CD4-positive, alpha-beta T cell (primary cell): ENCODE measurements at regions of chr13 and their contacts with region 1.

Region 1: DNA sequence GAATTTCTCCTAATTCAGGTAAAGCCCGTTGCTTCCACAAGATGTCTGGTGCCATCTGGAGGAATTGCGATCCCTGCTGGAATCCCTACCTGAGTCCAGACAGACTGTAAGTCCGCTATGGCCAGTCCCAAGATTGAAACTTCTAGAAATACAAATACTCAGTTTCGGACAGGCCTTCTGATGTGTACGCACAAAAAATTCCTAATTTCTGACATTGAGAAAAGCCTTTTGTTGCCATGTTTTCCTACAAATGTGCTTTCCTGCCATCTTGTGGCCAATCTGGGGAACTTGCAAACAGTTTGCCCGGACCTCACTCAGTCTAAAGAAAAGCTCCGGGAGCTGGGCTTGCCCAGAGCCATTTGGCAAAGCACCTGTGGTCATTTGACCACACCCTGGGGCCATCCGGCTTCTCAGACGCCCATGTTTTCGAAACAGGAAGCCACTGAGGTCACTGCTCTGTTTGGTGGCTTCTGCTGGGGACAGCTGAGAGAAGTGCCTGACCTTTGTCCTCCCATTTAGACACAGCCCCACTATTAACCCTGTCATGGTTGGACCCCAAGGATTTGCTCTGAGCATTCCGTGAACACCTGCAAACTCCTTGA is 79.4 kb downstream of the SLC15A1 start:
- DNase-seq: peak; percentile 19 to 75 (median 34)
- ATAC-seq: peak; percentile 46
- H3K4me3 ChIP-seq: no peak overlapping the region
- H3K4me3 Mint-ChIP-seq: no peak overlapping the region
- H3K27ac ChIP-seq: no peak overlapping the region
- H3K27ac Mint-ChIP-seq: no peak overlapping the region
- H3K4me1 ChIP-seq: peaks cover 6% of the 10 kb centered on the region
- H3K4me1 Mint-ChIP-seq: no peaks in the 10 kb centered on the region
- H3K27me3 ChIP-seq: no peaks in the 10 kb centered on the region
- H3K27me3 Mint-ChIP-seq: no peaks in the 10 kb centered on the region
- CTCF ChIP-seq: peak; percentile 79

Region 2: GRCh38 chr13:97855570-97856303 is 817.3 kb before region 1 on chr13:
- CTCF ChIA-PET with region 1: no interaction called
- POLR2A ChIA-PET with region 1: no interaction called
- intact Hi-C with region 1: loop called (anchors 1 to 2 kb)
- DNase-seq: peak in 4 of 14 experiments; percentile 3 to 38 (median 24)
- ATAC-seq: no peak
- H3K4me3 ChIP-seq: no peak overlapping the region
- H3K4me3 Mint-ChIP-seq: no peak overlapping the region
- H3K27ac ChIP-seq: no peak overlapping the region
- H3K27ac Mint-ChIP-seq: no peak overlapping the region
- H3K4me1 ChIP-seq: no peaks in the 10 kb centered on the region
- H3K4me1 Mint-ChIP-seq: no peaks in the 10 kb centered on the region
- H3K27me3 ChIP-seq: no peaks in the 10 kb centered on the region
- H3K27me3 Mint-ChIP-seq: peaks cover 29% of the 10 kb centered on the region
- CTCF ChIP-seq: peak; percentile 65

Region 3: DNA sequence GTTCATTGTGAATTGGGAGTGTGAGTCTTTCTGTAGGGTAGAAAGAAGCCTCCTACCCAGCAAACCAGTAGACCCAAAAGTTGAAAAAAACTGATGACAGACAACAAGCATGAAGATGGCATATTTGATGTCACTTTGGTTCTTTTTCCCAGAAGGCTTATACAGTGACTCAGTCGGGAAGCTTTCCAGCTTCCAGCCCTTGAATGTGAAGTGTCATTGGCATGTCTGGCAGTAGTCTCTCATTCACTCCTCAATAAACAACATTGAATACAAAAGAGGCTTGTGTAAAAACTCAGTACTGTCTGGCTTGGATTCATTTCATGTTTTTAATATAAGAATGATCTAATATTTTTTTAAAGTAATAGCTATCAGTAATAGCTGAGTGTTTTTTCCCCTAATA is 650.8 kb before region 1 on chr13:
- CTCF ChIA-PET with region 1: no interaction called
- POLR2A ChIA-PET with region 1: no interaction called
- intact Hi-C with region 1: loop called in 1 of 2 experiments (anchors 10 kb)
- DNase-seq: no peak
- ATAC-seq: no peak
- H3K4me3 ChIP-seq: no peak overlapping the region
- H3K4me3 Mint-ChIP-seq: no peak overlapping the region
- H3K27ac ChIP-seq: no peak overlapping the region
- H3K27ac Mint-ChIP-seq: no peak overlapping the region
- H3K4me1 ChIP-seq: no peaks in the 10 kb centered on the region
- H3K4me1 Mint-ChIP-seq: no peaks in the 10 kb centered on the region
- H3K27me3 ChIP-seq: no peaks in the 10 kb centered on the region
- H3K27me3 Mint-ChIP-seq: no peaks in the 10 kb centered on the region
- CTCF ChIP-seq: no peak

Region 4: GRCh38 chr13:98349731-98350305 is 323.2 kb before region 1 on chr13:
- CTCF ChIA-PET with region 1: no interaction called
- POLR2A ChIA-PET with region 1: no interaction called
- intact Hi-C with region 1: loop called in 1 of 2 experiments (anchors 10 kb)
- DNase-seq: no peak
- ATAC-seq: no peak
- H3K4me3 ChIP-seq: no peak overlapping the region
- H3K4me3 Mint-ChIP-seq: no peak overlapping the region
- H3K27ac ChIP-seq: no peak overlapping the region
- H3K27ac Mint-ChIP-seq: no peak overlapping the region
- H3K4me1 ChIP-seq: no peaks in the 10 kb centered on the region
- H3K4me1 Mint-ChIP-seq: no peaks in the 10 kb centered on the region
- H3K27me3 ChIP-seq: no peaks in the 10 kb centered on the region
- H3K27me3 Mint-ChIP-seq: no peaks in the 10 kb centered on the region
- CTCF ChIP-seq: no peak

Region 5: GRCh38 chr13:98445340-98446233 is 227.5 kb before region 1 on chr13:
- CTCF ChIA-PET with region 1: interaction called, 9 read pairs
- POLR2A ChIA-PET with region 1: interaction called, 4 read pairs
- intact Hi-C with region 1: loop called (anchors 1 kb)
- DNase-seq: peak; percentile 62 to 88 (median 74)
- ATAC-seq: peak; percentile 99
- H3K4me3 ChIP-seq: no peak overlapping the region
- H3K4me3 Mint-ChIP-seq: peak overlapping the region; percentile 63
- H3K27ac ChIP-seq: peak overlapping the region; percentile 52 to 55
- H3K27ac Mint-ChIP-seq: peak overlapping the region; percentile 90
- H3K4me1 ChIP-seq: peaks cover 16% of the 10 kb centered on the region
- H3K4me1 Mint-ChIP-seq: peaks cover 22% of the 10 kb centered on the region
- H3K27me3 ChIP-seq: no peaks in the 10 kb centered on the region
- H3K27me3 Mint-ChIP-seq: no peaks in the 10 kb centered on the region
- CTCF ChIP-seq: peak; percentile 97

Region 6: DNA sequence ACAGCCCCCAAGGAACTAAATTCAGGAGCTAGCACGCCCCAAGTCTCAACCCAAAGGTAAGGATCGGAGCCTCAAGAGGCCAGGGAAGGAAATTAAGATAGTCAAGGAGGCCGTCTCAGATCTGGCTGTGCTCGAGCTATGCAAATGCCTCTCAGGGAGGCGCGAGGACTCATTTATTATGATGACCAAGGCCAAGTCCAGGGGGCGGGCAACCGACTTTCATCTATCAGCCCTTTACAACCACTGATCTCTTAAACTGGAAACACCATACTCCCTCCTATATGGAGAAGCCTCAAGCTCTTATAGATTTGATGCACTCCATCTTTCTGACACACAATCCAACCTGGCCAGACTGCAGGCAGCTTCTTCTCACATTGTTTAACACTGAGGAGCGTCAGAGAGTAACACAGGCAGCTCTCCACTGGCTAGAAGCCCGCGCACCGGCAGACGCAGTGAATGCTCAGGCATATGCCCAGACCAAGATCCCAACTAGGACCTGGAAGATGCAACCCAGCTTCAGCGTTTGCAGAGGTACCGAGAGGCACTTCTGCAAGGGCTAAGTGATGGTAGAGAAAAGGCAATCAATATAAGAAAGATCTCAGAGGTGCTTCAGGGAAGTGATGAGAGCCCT is 89.1 kb after region 1 on chr13:
- CTCF ChIA-PET with region 1: no interaction called
- POLR2A ChIA-PET with region 1: no interaction called
- intact Hi-C with region 1: no loop called
- DNase-seq: no peak
- ATAC-seq: no peak
- H3K4me3 ChIP-seq: no peak overlapping the region
- H3K4me3 Mint-ChIP-seq: no peak overlapping the region
- H3K27ac ChIP-seq: no peak overlapping the region
- H3K27ac Mint-ChIP-seq: no peak overlapping the region
- H3K4me1 ChIP-seq: no peaks in the 10 kb centered on the region
- H3K4me1 Mint-ChIP-seq: no peaks in the 10 kb centered on the region
- H3K27me3 ChIP-seq: peaks cover 0 to 4% of the 10 kb centered on the region in 2 experiments
- H3K27me3 Mint-ChIP-seq: peaks cover 23% of the 10 kb centered on the region
- CTCF ChIP-seq: no peak